Heart right ventricle (tissue), 16 donors: ENCODE measurements at regions of chr7 and their contacts with region 1.

Region 1: GRCh38 chr7:129644634-129645230 is 33.2 kb downstream of the NRF1 start:
- DNase-seq: no peak
- ATAC-seq: peak in 3 of 8 donors; percentile 41 to 52 (median 44)
- H3K4me3 ChIP-seq: no peak overlapping the region
- H3K27ac ChIP-seq: no peak overlapping the region
- H3K4me1 ChIP-seq: peaks cover 0 to 32% (median 17%) of the 10 kb centered on the region in 9 donors
- H3K27me3 ChIP-seq: no peaks in the 10 kb centered on the region
- CTCF ChIP-seq: peak in 8 of 9 donors; percentile 11 to 67 (median 57)

Region 2: DNA sequence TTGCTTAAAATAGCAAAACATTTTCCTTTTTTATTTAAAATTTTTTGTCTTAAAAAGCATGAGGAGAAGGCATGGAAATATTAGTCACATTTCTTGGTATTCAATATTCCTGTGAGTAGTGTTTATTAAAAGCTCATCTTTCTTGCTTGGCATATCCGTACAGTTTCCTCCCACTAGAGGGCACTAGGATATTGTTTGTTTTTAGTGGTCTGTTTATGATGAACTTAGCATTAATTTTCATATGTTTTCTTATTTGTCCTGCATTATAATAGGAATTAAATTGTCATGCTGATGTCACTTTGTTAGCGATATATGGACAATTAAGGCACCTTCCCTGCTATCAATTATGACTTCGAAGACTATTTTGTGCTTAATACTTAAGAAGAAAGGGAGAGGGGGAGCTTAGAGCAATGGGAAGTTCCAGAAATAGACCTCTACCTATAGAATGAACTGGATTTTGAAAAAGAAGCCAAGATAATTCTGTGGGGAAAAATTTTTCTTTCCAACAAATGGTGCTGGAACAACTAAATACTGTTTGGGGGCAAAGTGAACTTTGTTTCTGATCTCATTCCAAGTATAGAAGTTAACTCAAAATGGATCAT is 301.5 kb before region 1 on chr7:
- intact Hi-C with region 1: loop called in 3 of 10 experiments (anchors 10 kb)
- DNase-seq: peak in 1 of 2 donors; percentile 8
- ATAC-seq: peak in 2 of 8 donors; percentile 51
- H3K4me3 ChIP-seq: no peak overlapping the region
- H3K27ac ChIP-seq: no peak overlapping the region
- H3K4me1 ChIP-seq: no peaks in the 10 kb centered on the region
- H3K27me3 ChIP-seq: no peaks in the 10 kb centered on the region
- CTCF ChIP-seq: peak; percentile 39 to 81 (median 73)

Region 3: GRCh38 chr7:129367700-129368388 is 276.9 kb before region 1 on chr7:
- intact Hi-C with region 1: loop called in 7 of 10 experiments (anchors 2 to 10 kb)
- DNase-seq: peak; percentile 63
- ATAC-seq: peak; percentile 79 to 92 (median 87)
- H3K4me3 ChIP-seq: peak overlapping the region in 4 of 10 donors; percentile 3 to 29 (median 11)
- H3K27ac ChIP-seq: no peak overlapping the region
- H3K4me1 ChIP-seq: peaks cover 0 to 18% (median 11%) of the 10 kb centered on the region in 9 donors
- H3K27me3 ChIP-seq: no peaks in the 10 kb centered on the region
- CTCF ChIP-seq: peak; percentile 71 to 96 (median 89)

Region 4: GRCh38 chr7:129494041-129494440 is 150.7 kb before region 1 on chr7:
- intact Hi-C with region 1: loop called in 3 of 10 experiments (anchors 10 kb)
- DNase-seq: no peak
- ATAC-seq: no peak
- H3K4me3 ChIP-seq: no peak overlapping the region
- H3K27ac ChIP-seq: no peak overlapping the region
- H3K4me1 ChIP-seq: peaks cover 0 to 10% (median 0%) of the 10 kb centered on the region in 9 donors
- H3K27me3 ChIP-seq: no peaks in the 10 kb centered on the region
- CTCF ChIP-seq: no peak

Region 5: GRCh38 chr7:129502376-129502776 is 142.4 kb before region 1 on chr7 and contains the start of gene SMKR1:
- intact Hi-C with region 1: loop called in 5 of 10 experiments (anchors 10 kb)
- DNase-seq: peak; percentile 59 to 74
- ATAC-seq: peak; percentile 81 to 93 (median 88)
- H3K4me3 ChIP-seq: peak within 1 kb of the TSS; percentile 28 to 63 (median 56)
- H3K27ac ChIP-seq: no peak within 1 kb of the TSS
- H3K4me1 ChIP-seq: peaks cover 5 to 12% (median 8%) of the 10 kb centered on the region in 9 donors
- H3K27me3 ChIP-seq: peaks cover 0 to 30% (median 9%) of the 10 kb centered on the region in 7 donors
- CTCF ChIP-seq: no peak
- total RNA-seq, gene SMKR1: not detected